ENCODE measurements at regions of chr10 and their contacts with region 1.

Region 1: DNA sequence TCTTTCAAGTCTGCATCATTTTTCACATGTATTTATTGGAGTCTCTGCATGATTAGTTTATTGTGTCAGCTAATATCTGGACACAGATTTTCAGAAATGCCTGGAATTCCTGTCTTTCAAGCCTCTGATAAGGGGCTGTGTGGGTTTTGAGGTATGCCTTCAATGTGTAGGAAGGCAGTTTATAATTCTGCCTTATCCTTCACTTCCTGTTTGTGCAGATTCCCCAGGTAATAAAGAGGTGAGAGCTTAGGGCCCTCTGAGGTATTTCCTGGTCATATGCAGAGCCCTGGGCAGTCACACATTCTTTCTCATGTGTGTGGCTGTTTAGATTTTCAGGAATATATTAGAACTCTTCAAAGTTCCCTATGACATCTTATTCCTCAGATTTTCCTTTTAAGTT is 79.4 kb upstream of the PRKCQ start:
- DNase-seq: no peak
- H3K4me3 ChIP-seq: no peak overlapping the region
- H3K27ac ChIP-seq: no peak overlapping the region
- H3K4me1 ChIP-seq: no peaks in the 10 kb centered on the region
- H3K27me3 ChIP-seq: peaks cover 79% of the 10 kb centered on the region
- CTCF ChIP-seq: no peak

Region 2: GRCh38 chr10:6431861-6432260 is 227.6 kb before region 1 on chr10:
- CTCF ChIA-PET with region 1: no interaction called
- POLR2A ChIA-PET with region 1: no interaction called
- intact Hi-C with region 1: loop called (anchors 5 kb)
- DNase-seq: no peak
- H3K4me3 ChIP-seq: no peak overlapping the region
- H3K27ac ChIP-seq: no peak overlapping the region
- H3K4me1 ChIP-seq: no peaks in the 10 kb centered on the region
- H3K27me3 ChIP-seq: peaks cover 98% of the 10 kb centered on the region
- CTCF ChIP-seq: no peak